Heart right ventricle (tissue), 16 donors: ENCODE measurements at regions of chr1 and their contacts with region 1.

Region 1: DNA sequence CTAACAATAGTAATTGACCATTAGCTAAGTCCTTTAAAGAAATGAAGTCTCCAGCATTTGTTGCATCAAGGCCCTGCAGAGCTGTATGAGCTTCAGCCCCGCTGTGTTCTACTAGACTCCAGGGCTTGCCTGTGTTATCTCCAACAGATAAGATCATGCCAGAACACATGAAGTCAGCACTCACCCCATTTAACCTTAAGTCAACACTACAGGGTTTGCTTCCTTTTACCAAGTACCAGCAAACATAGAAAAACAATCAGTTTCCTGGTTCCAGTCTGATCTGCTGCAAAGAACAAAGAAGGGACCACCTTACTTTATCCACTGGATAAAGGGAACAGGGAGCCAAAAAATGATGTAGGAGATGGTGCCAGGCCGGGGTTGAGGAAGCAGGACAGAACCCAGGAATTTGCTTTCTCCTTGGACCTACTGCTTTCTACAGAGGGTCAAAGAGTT is 41.3 kb upstream of the ENAH start:
- DNase-seq: peak; percentile 24 to 62
- ATAC-seq: peak; percentile 82 to 94 (median 92)
- H3K4me3 ChIP-seq: no peak overlapping the region
- H3K27ac ChIP-seq: peak overlapping the region in 8 of 10 donors; percentile 28 to 86 (median 59)
- H3K4me1 ChIP-seq: peaks cover 10 to 77% (median 59%) of the 10 kb centered on the region in 9 donors
- H3K27me3 ChIP-seq: no peaks in the 10 kb centered on the region
- CTCF ChIP-seq: no peak

Region 2: GRCh38 chr1:225666495-225666894 is 27.7 kb before region 1 on chr1:
- intact Hi-C with region 1: no loop called
- DNase-seq: no peak
- ATAC-seq: peak in 4 of 8 donors; percentile 9 to 34 (median 27)
- H3K4me3 ChIP-seq: no peak overlapping the region
- H3K27ac ChIP-seq: peak overlapping the region in 1 of 10 donors; percentile 15
- H3K4me1 ChIP-seq: peaks cover 0 to 18% (median 2%) of the 10 kb centered on the region in 9 donors
- H3K27me3 ChIP-seq: no peaks in the 10 kb centered on the region
- CTCF ChIP-seq: no peak

Region 3: DNA sequence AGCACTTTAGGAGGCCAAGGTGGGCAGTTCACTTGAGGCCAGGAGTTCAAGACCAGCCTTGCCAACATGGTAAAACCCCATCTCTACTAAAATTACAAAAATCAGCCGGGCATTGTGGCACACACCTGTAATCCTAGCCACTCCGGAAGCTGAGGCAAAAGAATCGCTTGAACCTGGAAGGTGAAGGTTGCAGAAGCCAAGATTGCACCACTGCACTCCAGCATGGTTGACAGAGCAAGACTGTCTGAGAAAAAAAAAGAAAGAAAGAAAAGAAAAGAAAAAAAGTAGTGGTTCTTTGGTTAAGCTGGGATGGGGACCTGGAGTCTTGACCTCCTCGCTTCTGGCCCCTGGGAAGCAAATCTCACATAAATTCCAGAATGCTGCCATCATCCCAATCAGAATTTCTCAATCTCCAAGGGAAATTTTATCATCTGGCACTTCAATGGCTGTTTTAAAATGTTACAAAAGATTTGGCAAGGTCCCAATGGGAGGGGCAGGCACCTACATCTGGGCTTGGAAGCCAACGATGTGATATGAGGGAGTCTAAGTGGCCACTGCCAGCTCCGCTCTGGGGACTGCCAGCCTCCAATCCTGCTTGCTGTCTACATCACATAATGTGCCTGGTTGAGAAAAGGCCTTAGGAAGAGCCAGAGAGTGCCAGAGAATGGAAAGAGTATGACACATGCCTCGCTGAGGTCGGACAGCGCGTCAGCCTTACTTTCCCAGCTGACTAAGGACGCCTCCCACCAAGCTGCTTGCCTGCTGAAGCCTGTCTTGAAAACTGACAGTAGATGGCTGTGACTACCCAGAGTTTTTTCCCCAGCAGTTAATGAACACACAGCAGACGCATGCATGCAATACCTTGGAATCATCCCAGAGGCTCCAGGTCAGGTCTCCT is 41.3 kb after region 1 on chr1:
- intact Hi-C with region 1: loop called in 1 of 10 experiments (anchors 5 kb)
- DNase-seq: peak; percentile 66 to 70
- ATAC-seq: peak; percentile 92 to 97 (median 94)
- H3K4me3 ChIP-seq: no peak overlapping the region
- H3K27ac ChIP-seq: peak overlapping the region in 9 of 10 donors; percentile 17 to 79 (median 70)
- H3K4me1 ChIP-seq: peaks cover 0 to 31% (median 23%) of the 10 kb centered on the region in 9 donors
- H3K27me3 ChIP-seq: no peaks in the 10 kb centered on the region
- CTCF ChIP-seq: peak in 3 of 9 donors; percentile 20 to 34 (median 26)

Region 4: GRCh38 chr1:225754940-225755641 is 60.9 kb after region 1 on chr1:
- intact Hi-C with region 1: loop called in 2 of 10 experiments (anchors 1 to 5 kb)
- DNase-seq: peak; percentile 56 to 64
- ATAC-seq: peak; percentile 78 to 95 (median 88)
- H3K4me3 ChIP-seq: no peak overlapping the region
- H3K27ac ChIP-seq: peak overlapping the region; percentile 10 to 91 (median 79)
- H3K4me1 ChIP-seq: peaks cover 15 to 80% (median 52%) of the 10 kb centered on the region in 9 donors
- H3K27me3 ChIP-seq: no peaks in the 10 kb centered on the region
- CTCF ChIP-seq: no peak

Region 5: DNA sequence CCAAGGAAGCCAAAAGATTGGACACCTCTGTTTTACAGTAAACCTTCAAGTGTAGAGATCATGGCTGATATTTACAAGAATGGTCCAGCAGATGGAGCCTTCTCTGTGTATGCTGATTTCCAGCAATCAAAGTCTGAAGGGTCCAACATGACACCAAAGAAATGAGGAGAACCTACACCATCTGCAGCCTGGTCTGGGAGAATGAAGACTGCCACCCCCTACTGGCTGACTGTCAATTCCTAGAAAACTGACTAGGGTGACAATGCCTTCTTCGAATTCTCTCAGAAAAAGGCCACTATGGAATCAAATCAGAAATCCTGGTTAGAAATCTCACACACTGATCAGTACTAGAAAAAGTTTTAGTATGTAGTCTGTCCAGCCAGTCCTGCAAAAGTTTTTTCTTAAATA is 1540.8 kb after region 1 on chr1:
- intact Hi-C with region 1: no loop called
- DNase-seq: peak in 1 of 2 donors; percentile 27
- ATAC-seq: peak in 7 of 8 donors; percentile 39 to 80 (median 67)
- H3K4me3 ChIP-seq: no peak overlapping the region
- H3K27ac ChIP-seq: no peak overlapping the region
- H3K4me1 ChIP-seq: peaks cover 0 to 42% (median 10%) of the 10 kb centered on the region in 9 donors
- H3K27me3 ChIP-seq: no peaks in the 10 kb centered on the region
- CTCF ChIP-seq: peak in 8 of 9 donors; percentile 26 to 66 (median 50)